ENCODE measurements at regions of chr2 and their contacts with region 1.

Region 1: DNA sequence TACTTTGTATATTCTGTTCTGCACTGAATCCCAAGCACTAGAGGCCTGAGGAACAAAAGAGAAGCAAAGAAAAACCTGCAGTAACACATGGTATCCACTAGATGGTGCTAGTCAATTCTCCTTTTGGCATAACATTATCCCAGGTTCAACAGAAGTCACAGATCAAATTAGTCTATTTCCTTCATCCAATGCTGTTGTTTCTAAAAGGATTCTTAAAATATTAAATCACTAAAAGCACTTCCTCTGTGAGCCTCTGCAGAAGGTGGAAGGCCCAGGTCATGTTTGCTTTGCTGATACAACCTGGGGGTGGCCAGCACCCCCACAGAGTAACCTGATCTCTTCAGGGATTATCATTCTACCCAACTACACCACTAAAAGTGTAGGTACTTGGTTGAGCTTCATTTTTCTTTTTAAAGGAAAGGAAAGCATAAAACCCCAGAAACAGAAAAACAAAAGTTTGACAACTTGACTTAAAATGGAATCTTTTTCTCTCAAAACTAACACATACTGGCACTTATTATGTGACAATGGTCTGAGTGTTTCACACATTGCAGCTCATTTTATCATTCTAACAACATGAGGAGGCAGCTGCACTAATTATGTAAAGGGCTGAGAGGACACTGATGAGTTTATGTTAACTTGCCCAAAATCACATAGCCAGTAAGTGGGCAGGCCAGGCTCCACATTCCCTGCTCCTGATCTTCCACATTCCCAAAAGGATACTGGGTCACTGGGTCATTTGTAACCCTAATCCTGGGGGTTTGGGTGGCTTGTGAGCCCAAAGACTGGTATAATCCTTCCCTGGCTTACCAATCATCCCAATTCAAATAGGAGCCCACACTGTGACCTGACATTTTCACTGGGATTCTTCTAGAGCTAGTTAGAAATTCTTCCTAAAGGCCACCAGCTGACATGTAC is 66.8 kb upstream of the DNER start:
- DNase-seq: no peak
- H3K4me3 ChIP-seq: no peak overlapping the region
- H3K27me3 ChIP-seq: no peaks in the 10 kb centered on the region
- CTCF ChIP-seq: peak; percentile 86

Region 2: GRCh38 chr2:229800997-229801754 is 20.1 kb after region 1 on chr2:
- CTCF ChIA-PET with region 1: interaction called, 14 read pairs
- POLR2A ChIA-PET with region 1: no interaction called
- DNase-seq: no peak
- H3K4me3 ChIP-seq: no peak overlapping the region
- H3K27me3 ChIP-seq: no peaks in the 10 kb centered on the region
- CTCF ChIP-seq: peak; percentile 72

Region 3: DNA sequence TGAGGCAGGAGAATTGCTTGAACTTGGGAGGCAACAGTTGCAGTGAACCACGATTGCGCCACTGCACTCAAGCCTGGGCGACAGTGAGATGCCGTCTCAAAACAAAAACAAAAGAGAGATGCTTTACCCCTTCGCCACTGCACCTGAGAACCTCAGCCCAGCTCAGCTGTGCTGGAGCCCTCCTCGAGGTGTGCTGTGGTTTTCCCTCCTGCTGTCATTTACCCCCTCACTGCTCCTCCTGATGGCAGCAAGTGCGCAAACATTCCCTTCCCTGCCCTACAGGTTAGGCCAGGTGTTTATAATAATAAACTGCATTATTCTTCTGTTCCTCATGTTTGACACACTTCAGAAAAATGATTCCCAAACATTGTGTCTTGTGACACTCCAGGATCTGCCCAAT is 149.5 kb after region 1 on chr2:
- CTCF ChIA-PET with region 1: no interaction called
- POLR2A ChIA-PET with region 1: no interaction called
- DNase-seq: no peak
- H3K4me3 ChIP-seq: no peak overlapping the region
- H3K27me3 ChIP-seq: no peaks in the 10 kb centered on the region
- CTCF ChIP-seq: no peak

Region 4: GRCh38 chr2:230738391-230738811 is 957.3 kb after region 1 on chr2:
- CTCF ChIA-PET with region 1: no interaction called
- POLR2A ChIA-PET with region 1: no interaction called
- DNase-seq: no peak
- H3K4me3 ChIP-seq: no peak overlapping the region
- H3K27me3 ChIP-seq: no peaks in the 10 kb centered on the region
- CTCF ChIP-seq: no peak